Posterior vena cava (tissue), 2 donors: ENCODE measurements at regions of chr6 and their contacts with region 1.

Region 1: GRCh38 chr6:112199001-112199403 is 55.4 kb downstream of the LAMA4 start:
- DNase-seq: no peak

Region 2: GRCh38 chr6:112180095-112180820 is 18.7 kb before region 1 on chr6:
- intact Hi-C with region 1: no loop called
- DNase-seq: no peak

Region 3: GRCh38 chr6:112311950-112312547 is 113.0 kb after region 1 on chr6:
- intact Hi-C with region 1: loop called in 1 of 2 experiments (anchors 10 kb)
- DNase-seq: no peak